ENCODE measurements at regions of chr19 and their contacts with region 1.

Region 1: GRCh38 chr19:50461066-50461875 is 15.0 kb upstream of the EMC10 start:
- DNase-seq: peak; percentile 87
- ATAC-seq: peak; percentile 70
- H3K4me3 ChIP-seq: no peak overlapping the region
- H3K4me3 Mint-ChIP-seq: peak overlapping the region; percentile 54
- H3K27ac ChIP-seq: peak overlapping the region; percentile 79 to 84
- H3K27ac Mint-ChIP-seq: peak overlapping the region; percentile 74
- H3K4me1 ChIP-seq: peaks cover 21 to 26% of the 10 kb centered on the region in 2 donors
- H3K4me1 Mint-ChIP-seq: peaks cover 18% of the 10 kb centered on the region
- H3K27me3 ChIP-seq: no peaks in the 10 kb centered on the region
- H3K27me3 Mint-ChIP-seq: no peaks in the 10 kb centered on the region
- CTCF ChIP-seq: peak; percentile 93

Region 2: DNA sequence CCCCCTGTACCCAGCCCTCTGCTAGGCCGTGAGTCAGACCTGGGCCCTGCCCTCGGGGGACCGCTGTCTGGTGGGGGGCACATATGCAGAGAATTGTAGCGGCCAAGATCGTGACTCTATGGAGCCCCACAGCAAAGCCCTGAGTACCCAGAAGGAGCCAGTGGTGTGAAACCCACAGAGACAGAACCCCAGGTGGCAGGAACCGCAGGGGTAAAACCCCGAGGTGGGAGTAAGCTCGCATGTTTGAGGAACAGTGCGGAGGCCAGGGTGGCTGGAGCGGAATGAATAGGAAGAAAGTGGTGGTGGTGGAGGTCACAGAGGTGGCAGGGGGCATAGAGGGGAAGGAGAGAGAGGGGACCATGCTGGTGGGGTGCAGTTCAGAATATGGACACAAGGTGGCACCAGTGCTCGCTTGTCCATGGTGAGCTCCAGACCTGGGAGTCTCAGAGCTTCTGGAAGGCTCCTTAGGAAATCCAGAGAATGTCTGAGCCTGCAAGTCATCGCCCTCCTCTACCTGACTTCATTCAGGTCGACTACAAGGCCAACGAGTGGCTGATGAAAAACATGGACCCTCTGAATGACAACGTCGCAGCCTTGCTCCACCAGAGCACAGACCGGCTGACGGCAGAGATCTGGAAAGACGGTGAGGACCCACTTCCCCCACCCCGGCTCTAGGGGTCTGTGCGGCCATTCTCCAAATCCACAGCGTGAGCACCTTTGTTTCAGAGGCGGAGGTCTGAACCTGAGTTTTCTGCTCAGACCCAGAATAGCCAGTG is 209.0 kb before region 1 on chr19:
- CTCF ChIA-PET with region 1: interaction called, 3 read pairs
- POLR2A ChIA-PET with region 1: no interaction called
- intact Hi-C with region 1: loop called (anchors 2 kb)
- DNase-seq: peak; percentile 61
- ATAC-seq: peak; percentile 45
- H3K4me3 ChIP-seq: no peak overlapping the region
- H3K4me3 Mint-ChIP-seq: no peak overlapping the region
- H3K27ac ChIP-seq: no peak overlapping the region
- H3K27ac Mint-ChIP-seq: no peak overlapping the region
- H3K4me1 ChIP-seq: no peaks in the 10 kb centered on the region
- H3K4me1 Mint-ChIP-seq: peaks cover 5% of the 10 kb centered on the region
- H3K27me3 ChIP-seq: peaks cover 0 to 9% (median 0%) of the 10 kb centered on the region in 4 experiments
- H3K27me3 Mint-ChIP-seq: peaks cover 18% of the 10 kb centered on the region
- CTCF ChIP-seq: peak; percentile 74

Region 3: DNA sequence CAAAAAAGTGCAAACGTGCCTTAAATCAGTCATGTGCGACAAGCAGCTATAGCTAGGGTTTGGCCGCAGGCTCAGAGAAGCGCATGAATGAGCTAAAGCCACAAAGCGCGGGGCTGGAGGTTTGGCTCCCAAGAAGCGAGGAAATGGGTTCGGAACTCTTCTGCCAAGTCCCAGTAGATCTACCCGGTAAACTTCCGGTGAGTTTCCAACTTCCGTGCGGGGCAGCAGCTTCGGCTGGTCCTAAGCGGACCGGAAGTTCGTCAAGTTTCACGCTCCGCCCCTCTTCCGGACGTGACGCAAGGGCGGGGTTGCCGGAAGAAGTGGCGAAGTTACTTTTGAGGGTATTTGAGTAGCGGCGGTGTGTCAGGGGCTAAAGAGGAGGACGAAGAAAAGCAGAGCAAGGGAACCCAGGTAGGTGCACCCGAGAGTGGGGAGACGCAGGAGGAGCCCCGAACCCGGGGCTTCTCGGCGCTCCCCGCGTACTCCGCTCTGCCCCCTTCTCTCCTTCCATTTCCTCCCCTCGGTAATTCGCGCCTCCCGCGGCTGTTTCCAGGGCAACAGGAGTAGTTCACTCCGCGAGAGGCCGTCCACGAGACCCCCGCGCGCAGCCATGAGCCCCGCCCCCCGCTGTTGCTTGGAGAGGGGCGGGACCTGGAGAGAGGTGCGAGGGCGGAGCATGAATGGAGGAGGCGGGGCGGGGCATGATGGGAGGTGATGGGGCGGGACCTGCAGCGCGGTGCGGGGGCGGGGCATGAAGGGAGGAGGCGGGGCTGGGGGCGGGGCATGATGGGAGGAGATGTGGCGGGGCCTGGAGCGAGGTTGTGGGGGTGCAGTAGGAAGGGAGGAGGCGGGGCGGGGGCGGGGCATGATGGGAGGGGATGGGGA is 84.9 kb before region 1 on chr19 and contains the start of gene NR1H2:
- CTCF ChIA-PET with region 1: interaction called, 131 read pairs
- POLR2A ChIA-PET with region 1: interaction called, 6 read pairs
- intact Hi-C with region 1: loop called (anchors 2 kb)
- DNase-seq: peak; percentile 99
- ATAC-seq: peak; percentile 87
- H3K4me3 ChIP-seq: peak within 1 kb of the TSS; percentile 30 to 98 (median 91)
- H3K4me3 Mint-ChIP-seq: peak within 1 kb of the TSS; percentile 97
- H3K27ac ChIP-seq: peak within 1 kb of the TSS; percentile 99 to 100
- H3K27ac Mint-ChIP-seq: peak within 1 kb of the TSS; percentile 99
- H3K4me1 ChIP-seq: peaks cover 6 to 14% of the 10 kb centered on the region in 2 donors
- H3K4me1 Mint-ChIP-seq: peaks cover 19% of the 10 kb centered on the region
- H3K27me3 ChIP-seq: no peaks in the 10 kb centered on the region
- H3K27me3 Mint-ChIP-seq: no peaks in the 10 kb centered on the region
- CTCF ChIP-seq: no peak
- total RNA-seq, gene NR1H2: 116 and 118 TPM in 2 replicates

Region 4: GRCh38 chr19:50414864-50415660 is 46.2 kb before region 1 on chr19:
- CTCF ChIA-PET with region 1: interaction called, 36 read pairs
- POLR2A ChIA-PET with region 1: interaction called, 15 read pairs
- intact Hi-C with region 1: loop called (anchors 1 kb)
- DNase-seq: peak; percentile 91
- ATAC-seq: peak; percentile 21
- H3K4me3 ChIP-seq: peak overlapping the region in 4 of 5 experiments; percentile 44 to 60 (median 52)
- H3K4me3 Mint-ChIP-seq: peak overlapping the region; percentile 81
- H3K27ac ChIP-seq: peak overlapping the region; percentile 97 to 98
- H3K27ac Mint-ChIP-seq: peak overlapping the region; percentile 98
- H3K4me1 ChIP-seq: peaks cover 30 to 48% of the 10 kb centered on the region in 2 donors
- H3K4me1 Mint-ChIP-seq: peaks cover 37% of the 10 kb centered on the region
- H3K27me3 ChIP-seq: no peaks in the 10 kb centered on the region
- H3K27me3 Mint-ChIP-seq: no peaks in the 10 kb centered on the region
- CTCF ChIP-seq: peak; percentile 92

Region 5: GRCh38 chr19:50476224-50476942 is 15.1 kb after region 1 on chr19 and contains the starts of genes EMC10 and GARIN5A:
- CTCF ChIA-PET with region 1: interaction called, 8 read pairs
- POLR2A ChIA-PET with region 1: interaction called, 4 read pairs
- intact Hi-C with region 1: loop called (anchors 1 kb)
- DNase-seq: peak; percentile 98
- ATAC-seq: peak; percentile 95
- H3K4me3 ChIP-seq: peak within 1 kb of the TSS; percentile 35 to 100 (median 98)
- H3K4me3 Mint-ChIP-seq: peak within 1 kb of the TSS; percentile 99
- H3K27ac ChIP-seq: peak within 1 kb of the TSS; percentile 82 to 90
- H3K27ac Mint-ChIP-seq: peak within 1 kb of the TSS; percentile 94
- H3K4me1 ChIP-seq: peaks cover 14 to 23% of the 10 kb centered on the region in 2 donors
- H3K4me1 Mint-ChIP-seq: peaks cover 29% of the 10 kb centered on the region
- H3K27me3 ChIP-seq: no peaks in the 10 kb centered on the region
- H3K27me3 Mint-ChIP-seq: no peaks in the 10 kb centered on the region
- CTCF ChIP-seq: no peak
- total RNA-seq, gene EMC10: 81.1 and 88.1 TPM in 2 replicates
- total RNA-seq, gene GARIN5A: 0.34 and 0.58 TPM in 2 replicates

Measured in B cell (primary cell).